Activated T-helper 1 cell treated with anti-CD3 and anti-CD28 coated beads, Interleukin-12 subunit alpha, Interleukin-12 subunit beta, Interleukin-2, Interleukin-4 antibody, amounts not matched to agents 30 ng/mL and 10 ng/mL and 1 ng/mL, durations not matched to agents 14 hours and 24 hours and 36 hours (primary cell): ENCODE measurements at regions of chr14 and their contacts with region 1.

Region 1: DNA sequence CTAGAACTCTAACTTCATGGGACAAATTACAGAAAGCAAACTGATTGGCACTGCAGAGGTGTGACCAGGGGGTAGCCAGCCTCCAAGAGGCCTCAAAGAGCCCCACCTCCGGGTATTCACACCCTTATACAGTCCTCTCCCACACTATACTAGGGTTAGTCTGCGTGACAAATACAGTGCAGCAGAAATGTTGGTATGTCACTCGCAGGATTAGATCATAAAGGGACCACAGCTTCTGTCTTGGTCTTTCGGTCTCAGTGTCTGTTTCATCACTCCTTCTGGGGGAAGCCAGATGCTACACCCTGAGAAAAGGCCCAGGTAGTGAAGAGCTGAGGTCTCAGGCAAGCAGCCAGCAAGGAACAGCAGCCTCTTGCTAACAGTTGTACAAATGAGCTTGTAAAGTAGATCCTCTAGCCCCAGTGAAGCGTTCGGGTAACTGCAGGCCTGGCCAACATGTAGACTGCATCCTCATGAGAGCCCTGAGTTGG is 68.9 kb upstream of the SAV1 start:
- DNase-seq: peak; percentile 18
- H3K4me3 Mint-ChIP-seq: no peak overlapping the region
- H3K27ac Mint-ChIP-seq: peak overlapping the region; percentile 87
- H3K4me1 Mint-ChIP-seq: peaks cover 45% of the 10 kb centered on the region
- H3K27me3 Mint-ChIP-seq: no peaks in the 10 kb centered on the region

Region 2: DNA sequence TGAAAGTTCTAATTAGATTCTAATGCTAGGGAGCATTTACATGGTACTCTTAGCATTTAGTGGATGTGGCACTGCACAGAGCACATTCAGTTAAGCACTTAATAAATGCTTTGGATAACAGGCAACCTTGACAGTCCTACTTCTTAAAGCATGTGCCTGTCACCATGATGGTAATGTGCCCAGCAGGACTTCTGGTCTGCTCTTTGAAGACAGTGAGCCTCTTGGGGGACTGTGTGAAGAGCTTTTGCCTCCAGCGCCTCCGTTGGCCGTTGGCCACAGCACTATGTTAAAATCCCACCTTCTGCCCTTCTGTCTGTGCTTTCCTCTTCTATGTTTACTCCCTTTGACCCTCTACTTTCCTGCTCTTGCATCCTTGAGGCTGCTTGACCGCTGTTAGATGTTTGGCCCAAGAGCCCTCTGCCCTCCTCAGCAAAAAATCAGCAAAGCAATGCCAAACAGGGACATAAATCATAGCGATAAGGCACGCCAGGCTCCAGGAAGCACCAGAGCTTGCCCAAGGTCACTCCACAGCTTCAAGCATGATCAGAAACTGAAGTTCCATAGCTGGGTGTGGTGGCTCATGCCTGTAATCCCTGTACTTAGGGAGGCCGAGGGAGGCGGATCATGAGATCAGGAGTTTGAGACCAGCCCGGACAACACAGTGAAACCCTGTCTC is 348.6 kb before region 1 on chr14:
- intact Hi-C with region 1: no loop called
- DNase-seq: no peak
- H3K4me3 Mint-ChIP-seq: no peak overlapping the region
- H3K27ac Mint-ChIP-seq: no peak overlapping the region
- H3K4me1 Mint-ChIP-seq: no peaks in the 10 kb centered on the region
- H3K27me3 Mint-ChIP-seq: peaks cover 7% of the 10 kb centered on the region

Region 3: GRCh38 chr14:50750323-50750722 is 13.3 kb after region 1 on chr14:
- intact Hi-C with region 1: loop called (anchors 1 kb)
- DNase-seq: no peak
- H3K4me3 Mint-ChIP-seq: no peak overlapping the region
- H3K27ac Mint-ChIP-seq: peak overlapping the region; percentile 14
- H3K4me1 Mint-ChIP-seq: peaks cover 31% of the 10 kb centered on the region
- H3K27me3 Mint-ChIP-seq: no peaks in the 10 kb centered on the region

Region 4: DNA sequence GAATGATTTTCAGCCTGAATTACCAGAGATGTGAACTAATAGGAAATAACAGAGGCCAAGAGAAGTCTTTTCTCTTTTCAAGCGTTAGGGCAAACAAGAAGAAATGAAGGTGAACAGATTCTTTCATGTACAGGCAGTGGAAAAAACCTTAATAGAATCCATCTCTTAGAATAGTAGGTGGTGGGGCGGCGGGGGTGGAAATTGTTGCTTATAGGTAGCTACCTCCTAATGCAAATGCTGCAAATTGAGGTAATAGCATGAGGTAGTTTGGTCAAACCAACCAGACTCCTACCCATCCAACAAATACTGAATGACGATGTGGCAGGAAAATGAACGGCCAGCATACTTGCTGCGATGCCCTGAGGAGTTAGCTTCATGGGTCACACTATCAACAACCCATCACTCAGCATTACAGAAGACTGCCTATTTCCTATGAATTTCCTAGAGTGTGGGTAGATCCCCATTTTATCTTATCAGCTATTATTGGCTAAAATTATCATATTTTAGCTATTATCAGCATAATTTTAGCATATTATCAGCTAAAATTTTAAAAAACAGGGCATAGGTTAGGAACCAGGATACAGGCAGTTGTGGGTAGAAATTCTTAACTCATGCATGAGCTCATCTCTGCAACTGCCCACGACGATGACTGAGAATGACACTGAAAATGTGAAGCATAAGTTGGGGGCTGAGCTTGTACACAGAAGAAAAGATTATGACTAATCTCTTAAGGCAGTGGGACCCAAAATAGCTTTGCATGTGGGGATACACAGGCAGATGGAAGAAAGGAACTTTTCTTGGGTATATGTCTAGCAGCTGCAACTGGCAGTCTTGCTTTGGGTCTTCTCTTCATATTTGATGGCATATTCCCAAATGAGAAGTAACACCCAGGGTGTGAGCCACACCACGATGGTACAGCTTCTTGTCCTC is 25.3 kb after region 1 on chr14:
- intact Hi-C with region 1: loop called (anchors 1 kb)
- DNase-seq: no peak
- H3K4me3 Mint-ChIP-seq: peak overlapping the region; percentile 7
- H3K27ac Mint-ChIP-seq: peak overlapping the region; percentile 74
- H3K4me1 Mint-ChIP-seq: peaks cover 19% of the 10 kb centered on the region
- H3K27me3 Mint-ChIP-seq: no peaks in the 10 kb centered on the region

Region 5: DNA sequence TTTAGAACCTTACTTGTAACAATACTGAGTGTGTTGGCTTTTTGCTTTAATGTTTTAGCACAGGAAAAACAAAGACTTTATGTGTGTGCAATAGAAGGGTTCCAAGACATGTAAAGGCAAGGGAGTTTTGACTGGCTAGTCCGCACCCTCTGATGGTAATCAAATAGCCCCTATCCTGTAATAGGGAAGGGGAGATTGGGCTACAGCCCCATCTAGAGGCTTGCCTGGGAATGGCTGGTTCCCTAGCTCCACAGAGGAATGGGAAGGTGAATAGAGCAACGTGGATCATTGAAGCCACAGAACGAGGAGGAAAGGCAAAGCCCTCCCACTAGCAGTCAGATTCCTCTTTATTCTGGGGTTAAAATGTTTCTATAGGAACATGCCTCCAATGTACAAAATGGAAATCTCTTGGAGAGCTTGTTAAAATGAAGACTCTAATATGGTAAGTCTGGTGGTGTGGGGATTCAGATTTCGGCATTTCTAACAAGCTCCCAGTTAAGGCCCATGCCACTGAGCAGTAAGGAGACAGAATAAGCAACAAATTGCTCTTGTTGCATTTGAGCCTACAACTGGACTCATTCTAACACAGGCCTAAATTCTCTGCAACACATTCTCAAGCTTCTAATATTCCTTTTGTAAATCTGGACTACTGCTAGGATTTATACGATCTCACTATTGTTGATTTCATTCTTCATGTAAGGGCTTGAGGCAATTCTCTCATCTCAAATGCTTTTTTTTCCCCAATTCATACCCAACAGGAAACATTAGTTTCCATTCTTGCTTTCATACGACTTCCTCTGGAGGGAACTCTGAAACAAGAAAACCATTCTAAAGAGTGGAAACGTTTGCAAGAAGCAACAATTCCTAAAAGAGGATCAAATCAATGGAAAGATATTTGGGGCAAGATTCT is 36.9 kb after region 1 on chr14:
- intact Hi-C with region 1: no loop called
- DNase-seq: no peak
- H3K4me3 Mint-ChIP-seq: no peak overlapping the region
- H3K27ac Mint-ChIP-seq: no peak overlapping the region
- H3K4me1 Mint-ChIP-seq: peaks cover 19% of the 10 kb centered on the region
- H3K27me3 Mint-ChIP-seq: no peaks in the 10 kb centered on the region